Caco-2 (cell line): ENCODE measurements at regions of chr4 and their contacts with region 1.

Region 1: GRCh38 chr4:83830138-83830888 is 294.4 kb downstream of the GPAT3 start:
- DNase-seq: peak; percentile 51 to 61
- H3K4me3 ChIP-seq: no peak overlapping the region
- H3K4me3 Mint-ChIP-seq: no peak overlapping the region
- H3K27ac Mint-ChIP-seq: no peak overlapping the region
- H3K4me1 ChIP-seq: peaks cover 38% of the 10 kb centered on the region
- H3K4me1 Mint-ChIP-seq: peaks cover 21% of the 10 kb centered on the region
- H3K27me3 ChIP-seq: no peaks in the 10 kb centered on the region
- H3K27me3 Mint-ChIP-seq: no peaks in the 10 kb centered on the region
- CTCF ChIP-seq: no peak

Region 2: DNA sequence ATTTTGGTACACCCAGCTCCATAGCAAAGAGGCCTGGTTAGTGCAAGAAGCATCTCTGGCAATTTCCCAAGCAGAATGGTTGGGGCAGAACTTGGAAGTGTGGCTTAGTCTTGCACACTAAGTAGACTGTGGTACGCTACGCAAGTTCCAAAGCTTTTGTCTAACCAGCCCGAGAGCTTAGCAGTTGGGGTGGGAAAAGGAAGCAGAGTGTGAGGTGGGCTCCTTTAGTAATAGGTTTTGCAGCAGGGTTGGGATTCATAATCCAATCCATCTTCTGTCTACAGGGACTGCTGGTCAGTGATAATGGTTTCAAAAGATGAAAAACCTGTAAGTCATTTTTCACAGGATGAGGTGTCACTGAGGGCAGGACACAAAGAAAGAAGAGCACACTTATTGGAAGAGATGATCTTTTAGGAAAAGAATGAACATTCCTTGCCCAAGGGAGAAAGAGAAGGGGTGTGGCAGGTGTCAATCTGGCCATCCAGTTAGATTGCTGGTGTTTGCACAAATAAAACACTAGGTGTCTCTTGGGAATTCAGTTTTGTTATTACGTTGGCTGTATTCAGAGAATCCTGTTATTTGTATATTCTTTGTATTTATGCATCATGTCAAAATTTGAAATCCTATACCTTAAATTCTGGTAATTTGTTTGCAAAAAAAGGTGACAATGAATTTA is 50.1 kb before region 1 on chr4:
- CTCF ChIA-PET with region 1: no interaction called
- POLR2A ChIA-PET with region 1: no interaction called
- intact Hi-C with region 1: loop called (anchors 5 kb)
- DNase-seq: peak in 1 of 2 experiments; percentile 21
- H3K4me3 ChIP-seq: no peak overlapping the region
- H3K4me3 Mint-ChIP-seq: no peak overlapping the region
- H3K27ac Mint-ChIP-seq: no peak overlapping the region
- H3K4me1 ChIP-seq: 0 out of 2 replicates have a peak, but pooled peaks cover 4% of the 10 kb centered on the region
- H3K4me1 Mint-ChIP-seq: peaks cover 13% of the 10 kb centered on the region
- H3K27me3 ChIP-seq: no peaks in the 10 kb centered on the region
- H3K27me3 Mint-ChIP-seq: no peaks in the 10 kb centered on the region
- CTCF ChIP-seq: no peak

Region 3: GRCh38 chr4:83810428-83810827 is 19.9 kb before region 1 on chr4:
- CTCF ChIA-PET with region 1: no interaction called
- POLR2A ChIA-PET with region 1: no interaction called
- intact Hi-C with region 1: no loop called
- DNase-seq: no peak
- H3K4me3 ChIP-seq: no peak overlapping the region
- H3K4me3 Mint-ChIP-seq: no peak overlapping the region
- H3K27ac Mint-ChIP-seq: no peak overlapping the region
- H3K4me1 ChIP-seq: no peaks in the 10 kb centered on the region
- H3K4me1 Mint-ChIP-seq: no peaks in the 10 kb centered on the region
- H3K27me3 ChIP-seq: no peaks in the 10 kb centered on the region
- H3K27me3 Mint-ChIP-seq: peaks cover 7% of the 10 kb centered on the region
- CTCF ChIP-seq: no peak